Heart left ventricle (tissue), 16 donors: ENCODE measurements at regions of chr11 and their contacts with region 1.

Region 1: DNA sequence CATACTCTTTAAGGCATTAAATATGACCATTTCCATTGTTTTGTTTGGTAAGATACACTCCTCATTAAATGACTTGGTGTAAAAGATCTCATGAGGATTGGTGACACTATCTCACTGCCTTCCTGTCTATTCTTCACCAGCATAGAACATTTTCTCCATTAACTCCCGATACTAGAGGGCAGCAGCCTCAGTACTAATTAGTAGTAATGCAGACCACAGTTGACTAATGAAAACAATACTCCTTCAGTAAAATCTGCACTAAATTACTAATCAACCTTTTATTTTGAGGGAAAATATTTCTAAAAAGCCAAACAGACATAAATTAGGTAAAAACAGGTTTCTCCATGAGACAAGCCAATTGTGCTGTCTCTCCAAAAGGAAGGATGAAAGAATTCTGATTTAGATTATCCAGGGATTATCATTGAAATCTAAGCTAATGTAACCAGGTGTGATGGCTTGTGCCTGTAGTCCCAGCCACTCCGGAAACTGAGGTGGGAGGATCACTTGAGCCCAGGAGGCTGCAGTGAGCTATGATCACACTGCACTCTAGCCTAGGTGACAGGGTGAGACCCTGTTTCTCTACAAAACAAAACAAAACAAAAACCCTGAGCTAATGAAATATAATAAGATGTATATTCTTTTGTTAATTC is 9.4 kb downstream of the PGM2L1 start:
- DNase-seq: peak in 4 of 5 donors; percentile 22 to 48 (median 38)
- ATAC-seq: peak in 3 of 4 donors; percentile 69 to 81 (median 74)
- H3K4me3 ChIP-seq: no peak overlapping the region
- H3K27ac ChIP-seq: no peak overlapping the region
- H3K4me1 ChIP-seq: peaks cover 0 to 5% (median 0%) of the 10 kb centered on the region in 12 donors
- H3K27me3 ChIP-seq: no peaks in the 10 kb centered on the region
- CTCF ChIP-seq: peak; percentile 54 to 85 (median 72)
- POLR2A ChIP-seq: no peak

Region 2: GRCh38 chr11:74559934-74560309 is 171.1 kb after region 1 on chr11:
- intact Hi-C with region 1: loop called in 1 of 10 experiments (anchors 10 kb)
- DNase-seq: no peak
- ATAC-seq: peak in 1 of 4 donors; percentile 54
- H3K4me3 ChIP-seq: no peak overlapping the region
- H3K27ac ChIP-seq: peak overlapping the region in 3 of 12 donors; percentile 46 to 69 (median 50)
- H3K4me1 ChIP-seq: peaks cover 0 to 12% (median 0%) of the 10 kb centered on the region in 12 donors
- H3K27me3 ChIP-seq: no peaks in the 10 kb centered on the region
- CTCF ChIP-seq: no peak
- POLR2A ChIP-seq: no peak

Region 3: GRCh38 chr11:74570266-74571061 is 181.7 kb after region 1 on chr11:
- intact Hi-C with region 1: loop called in 7 of 10 experiments (anchors 5 to 10 kb)
- DNase-seq: peak in 4 of 5 donors; percentile 13 to 36 (median 32)
- ATAC-seq: peak in 3 of 4 donors; percentile 70 to 87 (median 85)
- H3K4me3 ChIP-seq: no peak overlapping the region
- H3K27ac ChIP-seq: no peak overlapping the region
- H3K4me1 ChIP-seq: no peaks in the 10 kb centered on the region
- H3K27me3 ChIP-seq: no peaks in the 10 kb centered on the region
- CTCF ChIP-seq: peak; percentile 60 to 77 (median 70)
- POLR2A ChIP-seq: no peak